ENCODE measurements at regions of chr12 and their contacts with region 1.

Region 1: GRCh38 chr12:118264068-118264467 is 108.6 kb downstream of the TAOK3 start:
- DNase-seq: no peak
- H3K4me3 ChIP-seq: no peak overlapping the region
- H3K27ac ChIP-seq: no peak overlapping the region
- H3K4me1 ChIP-seq: peaks cover 16% of the 10 kb centered on the region; the same call in 1 of the 2 replicates
- H3K27me3 ChIP-seq: no peaks in the 10 kb centered on the region
- CTCF ChIP-seq: no peak

Region 2: DNA sequence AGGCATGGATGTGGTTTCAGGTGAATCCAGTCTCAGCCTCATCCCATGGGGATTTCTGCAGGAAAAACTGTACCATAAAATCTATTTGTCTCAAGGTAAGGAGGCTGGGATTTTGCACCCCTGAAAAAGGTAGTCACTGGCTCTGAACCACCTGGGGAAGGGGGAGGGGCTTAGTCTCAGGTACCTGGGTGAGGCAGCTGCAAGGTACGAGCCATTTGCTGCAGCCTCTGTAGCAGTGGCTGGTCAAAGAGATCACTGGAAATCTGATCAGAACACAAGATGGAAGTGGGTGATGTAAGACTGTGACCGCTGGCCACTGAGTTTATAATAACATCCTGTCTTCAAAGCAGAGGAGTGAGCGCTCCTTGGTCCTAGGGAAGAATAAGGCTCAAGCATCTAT is 692.7 kb before region 1 on chr12:
- CTCF ChIA-PET with region 1: no interaction called
- POLR2A ChIA-PET with region 1: no interaction called
- intact Hi-C with region 1: no loop called
- DNase-seq: no peak
- H3K4me3 ChIP-seq: no peak overlapping the region
- H3K27ac ChIP-seq: no peak overlapping the region
- H3K4me1 ChIP-seq: no peaks in the 10 kb centered on the region
- H3K27me3 ChIP-seq: peaks cover 65% of the 10 kb centered on the region
- CTCF ChIP-seq: no peak

Region 3: GRCh38 chr12:118189741-118190191 is 74.3 kb before region 1 on chr12:
- CTCF ChIA-PET with region 1: no interaction called
- POLR2A ChIA-PET with region 1: no interaction called
- intact Hi-C with region 1: no loop called
- DNase-seq: no peak
- H3K4me3 ChIP-seq: no peak overlapping the region
- H3K27ac ChIP-seq: no peak overlapping the region
- H3K4me1 ChIP-seq: no peaks in the 10 kb centered on the region
- H3K27me3 ChIP-seq: no peaks in the 10 kb centered on the region
- CTCF ChIP-seq: no peak

Region 4: GRCh38 chr12:118220702-118221101 is 43.4 kb before region 1 on chr12:
- CTCF ChIA-PET with region 1: no interaction called
- POLR2A ChIA-PET with region 1: interaction called, 34 read pairs
- intact Hi-C with region 1: no loop called
- DNase-seq: no peak
- H3K4me3 ChIP-seq: no peak overlapping the region
- H3K27ac ChIP-seq: no peak overlapping the region
- H3K4me1 ChIP-seq: no peaks in the 10 kb centered on the region
- H3K27me3 ChIP-seq: no peaks in the 10 kb centered on the region
- CTCF ChIP-seq: no peak